Activated naive CD4-positive, alpha-beta T cell treated with anti-CD3 and anti-CD28 coated beads for 36 hours (primary cell): ENCODE measurements at regions of chr11 and their contacts with region 1.

Region 1: DNA sequence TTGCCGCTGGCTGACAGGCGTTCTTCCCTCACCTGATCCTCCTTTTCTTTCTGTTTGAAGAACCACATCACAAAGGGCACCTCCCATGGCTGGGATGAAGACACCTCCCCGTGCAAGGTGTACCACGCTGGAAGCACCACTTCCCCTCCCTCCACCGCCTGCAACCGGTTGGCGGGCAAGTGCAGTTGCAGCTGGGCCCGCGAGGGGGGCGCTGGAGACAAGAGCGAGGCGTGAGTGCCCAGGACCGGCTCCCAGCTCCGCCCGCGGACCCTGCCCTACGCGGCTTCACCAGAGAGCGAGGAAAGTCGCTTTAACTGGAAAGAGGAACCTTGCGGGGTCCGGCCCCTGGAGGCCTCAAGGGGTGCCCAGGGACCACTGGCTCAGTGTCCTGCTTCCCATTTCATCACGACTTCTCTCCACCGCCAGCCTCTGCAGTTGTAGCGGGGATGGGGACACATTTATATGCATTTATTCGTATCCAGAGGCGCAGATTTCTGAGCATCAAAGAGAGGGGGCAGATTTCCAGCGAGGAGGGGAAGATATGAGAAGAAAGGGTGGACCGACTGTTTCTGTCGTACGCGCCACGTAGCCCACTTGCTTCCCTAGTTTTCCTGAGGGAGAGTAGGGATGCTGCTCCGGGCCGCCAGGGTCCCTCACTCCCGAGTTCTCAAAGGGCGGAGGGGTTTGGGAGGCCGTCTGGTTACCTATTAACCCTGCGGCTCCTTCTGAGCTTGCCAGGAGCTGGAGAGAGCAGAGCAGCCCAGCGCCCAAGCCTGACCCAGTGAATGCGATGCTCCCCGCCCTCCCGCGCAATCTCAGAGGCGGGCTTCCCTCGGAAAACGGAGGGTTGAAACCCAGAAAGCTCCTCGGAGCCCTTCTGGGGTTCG is 3.5 kb downstream of the ESAM start:
- DNase-seq: peak; percentile 80
- H3K4me3 Mint-ChIP-seq: peak overlapping the region; percentile 56
- H3K27ac Mint-ChIP-seq: no peak overlapping the region
- H3K4me1 Mint-ChIP-seq: peaks cover 30% of the 10 kb centered on the region
- H3K27me3 Mint-ChIP-seq: peaks cover 45% of the 10 kb centered on the region

Region 2: DNA sequence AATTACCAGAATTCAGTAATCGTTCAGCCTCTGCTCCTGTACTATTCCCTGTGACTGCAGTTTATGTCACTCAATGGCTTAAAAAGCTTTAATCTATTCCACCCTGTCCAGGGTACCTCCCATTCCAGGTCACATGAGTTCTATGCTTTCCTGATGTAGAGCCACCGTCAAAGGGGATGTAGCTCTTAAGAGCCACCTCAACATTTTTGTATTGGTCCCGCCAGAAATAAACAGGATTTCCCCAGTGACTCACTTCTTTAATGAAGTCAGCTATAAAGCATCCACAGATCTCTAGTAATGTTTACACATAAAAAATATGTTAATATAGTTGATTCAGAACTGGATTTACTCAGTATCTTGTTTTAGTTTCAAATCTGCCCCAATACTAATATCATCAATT is 443.5 kb before region 1 on chr11:
- CTCF ChIA-PET with region 1: no interaction called
- intact Hi-C with region 1: no loop called
- DNase-seq: no peak
- H3K4me3 Mint-ChIP-seq: no peak overlapping the region
- H3K27ac Mint-ChIP-seq: no peak overlapping the region
- H3K4me1 Mint-ChIP-seq: no peaks in the 10 kb centered on the region
- H3K27me3 Mint-ChIP-seq: peaks cover 4% of the 10 kb centered on the region

Region 3: DNA sequence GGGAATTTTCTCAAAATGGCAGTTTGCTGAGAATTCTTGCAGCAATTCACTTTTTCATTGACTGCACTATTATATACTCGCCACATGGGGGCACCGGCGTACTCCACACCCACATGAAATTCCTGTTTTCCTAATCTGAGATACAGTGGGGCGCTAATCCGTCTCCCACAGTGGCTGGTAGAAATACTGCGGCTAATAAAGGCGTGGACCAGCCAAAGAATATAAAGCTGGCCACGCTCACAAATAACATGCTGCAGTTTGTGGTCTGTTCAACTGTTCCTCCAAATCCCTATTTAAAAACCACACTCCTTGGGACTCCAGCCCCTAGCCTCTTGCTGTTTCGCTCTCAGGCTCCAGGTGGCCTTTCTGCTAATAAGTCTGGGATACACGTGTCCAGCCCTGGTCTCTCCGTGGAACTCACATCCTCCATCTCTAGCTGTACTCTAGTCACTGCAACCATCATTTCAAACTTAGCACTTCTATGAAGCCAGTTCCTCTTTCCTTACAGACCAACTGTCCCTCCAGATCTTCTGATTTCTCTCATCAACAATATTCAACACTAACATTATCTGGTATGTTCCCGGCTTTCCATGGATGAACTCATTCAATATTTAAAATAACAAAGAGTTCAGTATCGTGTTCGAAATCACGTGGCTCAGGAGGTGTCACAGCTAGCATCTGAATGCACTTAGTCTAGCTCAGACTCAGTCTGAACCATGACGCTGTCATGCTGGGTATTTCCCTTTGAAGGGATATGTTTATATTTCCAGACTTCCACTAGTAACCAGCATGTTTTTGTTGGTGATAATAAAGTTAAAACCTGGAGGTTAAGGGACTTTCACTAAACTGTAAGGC is 113.9 kb before region 1 on chr11:
- CTCF ChIA-PET with region 1: interaction called, 7 read pairs
- intact Hi-C with region 1: loop called (anchors 1 kb)
- DNase-seq: peak; percentile 26
- H3K4me3 Mint-ChIP-seq: no peak overlapping the region
- H3K27ac Mint-ChIP-seq: no peak overlapping the region
- H3K4me1 Mint-ChIP-seq: no peaks in the 10 kb centered on the region
- H3K27me3 Mint-ChIP-seq: no peaks in the 10 kb centered on the region

Region 4: GRCh38 chr11:124707829-124708228 is 50.7 kb before region 1 on chr11:
- CTCF ChIA-PET with region 1: no interaction called
- intact Hi-C with region 1: no loop called
- DNase-seq: no peak
- H3K4me3 Mint-ChIP-seq: no peak overlapping the region
- H3K27ac Mint-ChIP-seq: no peak overlapping the region
- H3K4me1 Mint-ChIP-seq: no peaks in the 10 kb centered on the region
- H3K27me3 Mint-ChIP-seq: no peaks in the 10 kb centered on the region

Region 5: GRCh38 chr11:124769801-124770639 is 11.5 kb after region 1 on chr11:
- CTCF ChIA-PET with region 1: interaction called, 11 read pairs
- intact Hi-C with region 1: no loop called
- DNase-seq: no peak
- H3K4me3 Mint-ChIP-seq: no peak overlapping the region
- H3K27ac Mint-ChIP-seq: no peak overlapping the region
- H3K4me1 Mint-ChIP-seq: no peaks in the 10 kb centered on the region
- H3K27me3 Mint-ChIP-seq: no peaks in the 10 kb centered on the region

Region 6: DNA sequence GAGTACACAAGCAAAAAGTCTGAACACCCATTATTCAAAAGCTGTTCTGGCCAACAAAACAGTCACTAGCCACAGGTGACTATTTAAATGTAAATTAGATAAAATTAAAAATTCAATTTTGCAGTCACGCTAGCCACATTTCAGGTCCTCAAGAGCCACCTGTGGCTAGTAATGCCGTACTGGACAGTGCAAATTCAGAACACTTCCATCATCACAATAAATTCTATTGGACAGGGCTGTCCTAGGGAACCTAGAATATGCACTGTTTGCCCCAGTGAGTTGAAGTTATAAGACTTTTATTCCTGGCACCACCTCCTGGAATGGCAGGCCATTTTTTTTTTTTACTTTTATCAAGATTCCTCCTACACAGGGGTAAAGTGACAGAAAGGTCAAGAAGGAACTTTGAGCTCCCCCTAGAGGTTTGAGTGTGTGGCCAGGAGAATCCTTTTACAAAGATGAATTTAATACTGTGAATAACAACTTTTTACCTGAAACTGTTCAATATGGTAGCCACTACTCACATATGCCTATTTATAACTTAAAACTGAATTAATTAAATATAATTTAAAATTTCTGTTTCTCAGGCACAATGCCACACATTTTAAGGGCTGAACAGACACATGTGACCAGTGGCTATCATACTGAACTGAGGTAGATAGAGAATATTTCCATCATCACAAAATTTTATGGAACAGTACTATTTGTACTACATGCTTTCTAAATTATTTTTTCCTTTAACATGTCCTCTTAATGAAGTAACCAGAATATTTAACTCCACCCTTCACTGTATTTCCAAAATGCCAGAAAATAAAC is 35.1 kb after region 1 on chr11:
- CTCF ChIA-PET with region 1: interaction called, 26 read pairs
- intact Hi-C with region 1: loop called (anchors 1 kb)
- DNase-seq: peak; percentile 30
- H3K4me3 Mint-ChIP-seq: no peak overlapping the region
- H3K27ac Mint-ChIP-seq: no peak overlapping the region
- H3K4me1 Mint-ChIP-seq: peaks cover 41% of the 10 kb centered on the region
- H3K27me3 Mint-ChIP-seq: no peaks in the 10 kb centered on the region